Heart left ventricle (tissue), 16 donors: ENCODE measurements at regions of chr1 and their contacts with region 1.

Region 1: DNA sequence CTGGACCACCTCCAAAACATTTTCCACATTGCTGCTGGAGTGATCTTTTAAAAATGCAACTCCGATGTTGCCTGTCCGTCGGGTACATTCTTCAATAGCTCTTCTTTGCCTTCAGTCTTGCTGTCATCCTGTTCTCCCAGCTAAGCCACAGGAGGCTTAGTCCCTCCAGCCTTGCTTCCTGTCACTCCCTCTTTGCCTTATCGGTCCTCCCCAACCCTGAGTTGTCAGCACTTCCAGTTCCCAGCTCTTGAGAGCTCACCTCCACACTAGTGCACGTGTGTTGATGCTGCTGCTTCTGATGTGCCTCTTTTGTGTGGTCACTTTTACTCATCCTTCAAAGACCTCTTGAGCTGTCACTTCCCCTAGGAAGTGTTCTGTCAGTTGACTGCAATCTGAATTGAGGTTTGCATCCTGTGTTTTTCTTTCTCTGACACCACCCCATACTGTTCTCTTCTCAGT is 15.3 kb downstream of the UCK2 start:
- DNase-seq: peak in 1 of 5 donors; percentile 29
- ATAC-seq: peak; percentile 71 to 86 (median 78)
- H3K4me3 ChIP-seq: no peak overlapping the region
- H3K27ac ChIP-seq: no peak overlapping the region
- H3K4me1 ChIP-seq: peaks cover 0 to 31% (median 13%) of the 10 kb centered on the region in 12 donors
- H3K27me3 ChIP-seq: no peaks in the 10 kb centered on the region
- CTCF ChIP-seq: no peak
- POLR2A ChIP-seq: no peak

Region 2: GRCh38 chr1:165717918-165718515 is 124.7 kb before region 1 on chr1:
- intact Hi-C with region 1: loop called in 1 of 10 experiments (anchors 5 kb)
- DNase-seq: peak in 2 of 5 donors; percentile 21
- ATAC-seq: peak in 2 of 4 donors; percentile 41 to 49
- H3K4me3 ChIP-seq: no peak overlapping the region
- H3K27ac ChIP-seq: no peak overlapping the region
- H3K4me1 ChIP-seq: no peaks in the 10 kb centered on the region
- H3K27me3 ChIP-seq: no peaks in the 10 kb centered on the region
- CTCF ChIP-seq: peak; percentile 47 to 77 (median 58)
- POLR2A ChIP-seq: no peak

Region 3: DNA sequence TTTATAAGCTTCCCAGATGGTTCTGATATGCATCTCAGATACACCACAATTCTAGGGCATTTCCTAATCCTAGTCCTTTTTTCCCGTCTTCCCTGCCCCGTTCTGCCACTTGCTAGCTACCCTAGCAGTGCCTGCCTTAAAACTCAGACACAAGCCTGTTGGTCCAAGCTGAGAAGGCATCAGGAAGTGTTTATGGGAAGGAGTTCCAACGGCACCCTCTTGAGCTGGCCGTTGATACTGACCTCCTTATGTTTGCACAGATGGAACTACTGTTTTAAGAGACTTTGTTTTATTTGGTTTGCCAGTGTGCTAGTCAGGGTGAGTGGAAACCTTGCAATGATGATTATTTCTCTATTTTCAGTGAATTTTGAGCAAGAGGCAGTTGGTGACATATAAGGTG is 51.9 kb after region 1 on chr1:
- intact Hi-C with region 1: no loop called
- DNase-seq: no peak
- ATAC-seq: no peak
- H3K4me3 ChIP-seq: no peak overlapping the region
- H3K27ac ChIP-seq: peak overlapping the region in 1 of 12 donors; percentile 77
- H3K4me1 ChIP-seq: peaks cover 0 to 72% (median 48%) of the 10 kb centered on the region in 12 donors
- H3K27me3 ChIP-seq: no peaks in the 10 kb centered on the region
- CTCF ChIP-seq: no peak
- POLR2A ChIP-seq: no peak

Region 4: DNA sequence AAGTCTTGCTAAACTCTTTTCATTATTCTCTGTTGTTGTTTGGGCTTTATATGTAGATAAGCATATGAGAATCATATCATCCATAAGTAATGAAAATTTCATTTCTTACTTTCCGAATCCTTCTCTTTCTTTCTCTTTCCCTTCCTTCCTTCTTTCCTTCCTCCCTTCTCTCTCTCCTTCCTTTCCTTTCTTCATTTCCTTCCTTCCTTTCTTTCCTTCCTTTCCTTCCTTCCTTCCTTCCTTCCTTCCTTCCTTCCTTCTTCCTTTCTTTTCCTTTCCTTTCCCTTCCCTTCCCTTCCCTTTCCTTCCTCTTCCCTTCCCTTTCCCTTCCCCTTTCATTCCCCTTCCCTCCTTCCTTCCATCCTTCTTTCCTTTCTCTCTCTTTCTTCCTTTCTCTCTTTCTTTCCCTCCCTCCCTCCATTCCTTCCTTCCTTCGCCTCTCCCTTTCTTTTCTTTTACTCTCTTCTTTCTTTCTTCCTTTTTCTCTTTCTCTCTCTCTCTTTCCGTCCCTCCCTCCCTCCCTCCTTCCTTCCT is 132.0 kb after region 1 on chr1:
- intact Hi-C with region 1: no loop called
- DNase-seq: no peak
- ATAC-seq: no peak
- H3K4me3 ChIP-seq: no peak overlapping the region
- H3K27ac ChIP-seq: no peak overlapping the region
- H3K4me1 ChIP-seq: no peaks in the 10 kb centered on the region
- H3K27me3 ChIP-seq: no peaks in the 10 kb centered on the region
- CTCF ChIP-seq: no peak
- POLR2A ChIP-seq: no peak